Caco-2 (cell line): ENCODE measurements at regions of chr15 and their contacts with region 1.

Region 1: GRCh38 chr15:85788771-85789589 is 5.7 kb downstream of the KLHL25 start:
- DNase-seq: peak in 1 of 2 experiments; percentile 25
- H3K4me3 ChIP-seq: no peak overlapping the region
- H3K4me3 Mint-ChIP-seq: no peak overlapping the region
- H3K27ac Mint-ChIP-seq: no peak overlapping the region
- H3K4me1 ChIP-seq: peaks cover 7% of the 10 kb centered on the region
- H3K4me1 Mint-ChIP-seq: peaks cover 10% of the 10 kb centered on the region
- H3K27me3 ChIP-seq: no peaks in the 10 kb centered on the region
- H3K27me3 Mint-ChIP-seq: no peaks in the 10 kb centered on the region
- CTCF ChIP-seq: no peak

Region 2: DNA sequence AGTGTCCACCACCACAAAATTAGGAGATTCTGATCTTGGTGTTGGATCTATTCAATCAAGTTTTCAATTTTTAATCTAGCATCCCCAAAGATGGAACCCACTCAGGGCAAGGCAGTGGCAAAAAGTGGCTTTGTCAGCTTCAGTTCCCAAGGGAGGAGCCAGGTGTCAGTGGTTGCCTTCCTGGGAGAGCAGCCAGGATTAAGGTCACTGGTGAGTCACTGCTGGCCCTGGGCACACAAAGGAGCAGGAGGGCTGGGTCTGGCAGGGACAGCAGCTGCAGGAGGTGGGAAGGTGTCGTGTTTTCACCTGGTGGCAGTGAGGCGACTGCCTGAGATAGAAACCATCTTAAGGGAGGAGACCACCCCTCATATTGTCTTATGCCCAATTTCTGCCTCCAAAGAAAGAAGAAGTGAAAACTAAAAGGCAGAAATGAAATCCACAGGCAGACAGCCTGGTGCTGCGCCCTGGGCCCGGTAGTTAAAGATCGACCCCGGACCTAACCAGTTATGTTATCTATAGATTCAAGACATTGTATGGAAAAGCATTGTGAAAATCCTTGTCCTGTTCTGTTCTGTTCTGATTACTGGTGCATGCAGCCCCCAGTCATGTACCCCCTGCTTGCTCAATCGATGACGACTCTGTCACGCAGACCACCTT is 11.6 kb after region 1 on chr15:
- CTCF ChIA-PET with region 1: no interaction called
- POLR2A ChIA-PET with region 1: no interaction called
- intact Hi-C with region 1: no loop called
- DNase-seq: peak; percentile 80 to 84
- H3K4me3 ChIP-seq: no peak overlapping the region
- H3K4me3 Mint-ChIP-seq: peak overlapping the region; percentile 20
- H3K27ac Mint-ChIP-seq: peak overlapping the region; percentile 78
- H3K4me1 ChIP-seq: peaks cover 21% of the 10 kb centered on the region
- H3K4me1 Mint-ChIP-seq: peaks cover 17% of the 10 kb centered on the region
- H3K27me3 ChIP-seq: no peaks in the 10 kb centered on the region
- H3K27me3 Mint-ChIP-seq: no peaks in the 10 kb centered on the region
- CTCF ChIP-seq: peak; percentile 27 to 75

Region 3: GRCh38 chr15:85878833-85879232 is 89.9 kb after region 1 on chr15:
- CTCF ChIA-PET with region 1: no interaction called
- POLR2A ChIA-PET with region 1: interaction called, 17 read pairs
- intact Hi-C with region 1: no loop called
- DNase-seq: no peak
- H3K4me3 ChIP-seq: no peak overlapping the region
- H3K4me3 Mint-ChIP-seq: no peak overlapping the region
- H3K27ac Mint-ChIP-seq: no peak overlapping the region
- H3K4me1 ChIP-seq: no peaks in the 10 kb centered on the region
- H3K4me1 Mint-ChIP-seq: no peaks in the 10 kb centered on the region
- H3K27me3 ChIP-seq: no peaks in the 10 kb centered on the region
- H3K27me3 Mint-ChIP-seq: peaks cover 11% of the 10 kb centered on the region
- CTCF ChIP-seq: no peak